ENCODE measurements at regions of chr12 and their contacts with region 1.

Region 1: DNA sequence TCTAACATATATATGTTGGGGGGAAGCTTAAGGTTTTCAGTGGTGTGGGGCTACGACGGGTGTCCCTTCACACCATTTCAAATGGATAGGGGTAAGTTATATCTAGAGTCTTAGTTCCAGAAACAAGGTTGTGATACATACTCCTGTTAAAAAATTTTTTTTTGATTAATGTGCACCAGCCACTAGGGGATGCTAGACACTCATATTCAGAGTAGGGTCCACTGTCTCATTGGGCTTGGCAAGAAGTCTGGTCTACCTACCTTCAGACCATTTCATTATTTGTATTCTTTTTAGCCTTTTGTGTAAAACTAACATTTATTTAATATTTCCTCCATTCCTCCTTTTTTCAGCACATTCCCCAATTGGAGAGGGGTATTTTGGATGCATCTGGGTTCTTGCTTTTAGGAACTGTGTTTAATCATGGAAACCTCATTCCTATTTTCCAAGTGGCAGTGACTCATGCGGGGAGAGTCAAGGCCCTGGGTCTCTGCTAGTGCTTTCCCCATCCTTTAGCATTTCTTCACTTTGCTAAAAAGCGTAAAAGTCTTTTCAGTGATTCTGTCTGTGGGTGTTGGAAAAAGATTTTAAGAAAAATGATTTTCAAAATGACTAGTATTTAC is 33.4 kb downstream of the ANO4 start:
- DNase-seq: peak; percentile 9
- CTCF ChIP-seq: peak; percentile 64

Region 2: DNA sequence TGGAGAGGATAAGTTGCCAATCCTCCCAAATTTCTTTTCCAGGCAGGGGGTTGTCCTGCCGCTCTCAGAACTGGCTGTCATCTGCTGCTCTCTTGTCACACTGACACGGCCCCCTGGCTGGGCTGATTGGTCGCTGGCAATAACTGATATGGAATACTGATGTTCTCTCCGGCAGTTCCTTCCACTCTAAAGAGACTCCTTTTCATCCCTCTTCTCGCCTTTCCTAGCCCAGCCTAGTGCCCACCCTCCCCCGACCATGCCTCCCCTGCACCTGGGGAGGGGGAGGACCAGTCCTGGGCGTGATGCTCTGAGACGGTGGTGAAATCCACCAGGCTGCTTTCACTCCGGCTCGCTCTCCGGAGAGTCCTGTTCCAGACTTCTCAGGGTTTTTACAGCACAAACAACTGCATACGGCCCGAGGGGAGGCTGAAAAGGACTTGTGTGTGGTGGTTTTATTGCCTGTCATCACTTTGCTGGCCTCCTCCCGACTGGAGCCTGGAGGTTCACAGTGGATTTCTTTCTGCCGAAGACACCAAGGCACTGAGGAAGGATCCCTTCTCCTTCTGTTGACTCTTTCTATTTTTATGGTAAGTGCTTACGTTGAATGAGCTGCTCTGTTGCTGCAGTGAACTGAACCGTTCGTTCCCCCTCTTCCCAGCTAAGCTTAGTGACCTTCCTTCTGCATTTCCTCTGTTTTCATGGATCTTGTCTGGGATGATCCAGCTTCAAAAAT is 33.4 kb before region 1 on chr12 and contains the start of gene ANO4:
- in situ Hi-C with region 1: no loop called
- DNase-seq: no peak
- CTCF ChIP-seq: no peak

Region 3: DNA sequence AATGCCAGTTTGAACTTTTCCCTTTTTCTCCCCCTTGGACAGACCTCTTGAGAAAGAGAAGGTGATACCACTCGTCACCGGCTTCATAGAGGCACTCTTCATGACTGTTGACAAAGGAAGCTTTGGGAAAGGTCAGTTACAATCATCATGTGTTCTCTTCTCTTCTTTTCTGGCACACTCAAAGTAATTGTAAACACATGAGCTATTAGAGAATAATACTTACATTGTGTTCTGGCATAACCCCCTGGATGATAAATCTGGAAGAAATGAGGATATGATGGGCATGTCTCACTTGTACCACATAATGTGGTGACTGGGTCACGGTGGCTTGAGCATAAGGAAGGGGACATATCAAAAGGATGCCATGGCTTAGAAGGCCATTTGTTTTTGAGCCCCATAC is 471.9 kb after region 1 on chr12:
- in situ Hi-C with region 1: loop called (anchors 25 kb)
- DNase-seq: no peak
- CTCF ChIP-seq: no peak

Measured in GM13977 (cell line).